K562 (cell line): ENCODE measurements at regions of chr9 and their contacts with region 1.

Region 1: DNA sequence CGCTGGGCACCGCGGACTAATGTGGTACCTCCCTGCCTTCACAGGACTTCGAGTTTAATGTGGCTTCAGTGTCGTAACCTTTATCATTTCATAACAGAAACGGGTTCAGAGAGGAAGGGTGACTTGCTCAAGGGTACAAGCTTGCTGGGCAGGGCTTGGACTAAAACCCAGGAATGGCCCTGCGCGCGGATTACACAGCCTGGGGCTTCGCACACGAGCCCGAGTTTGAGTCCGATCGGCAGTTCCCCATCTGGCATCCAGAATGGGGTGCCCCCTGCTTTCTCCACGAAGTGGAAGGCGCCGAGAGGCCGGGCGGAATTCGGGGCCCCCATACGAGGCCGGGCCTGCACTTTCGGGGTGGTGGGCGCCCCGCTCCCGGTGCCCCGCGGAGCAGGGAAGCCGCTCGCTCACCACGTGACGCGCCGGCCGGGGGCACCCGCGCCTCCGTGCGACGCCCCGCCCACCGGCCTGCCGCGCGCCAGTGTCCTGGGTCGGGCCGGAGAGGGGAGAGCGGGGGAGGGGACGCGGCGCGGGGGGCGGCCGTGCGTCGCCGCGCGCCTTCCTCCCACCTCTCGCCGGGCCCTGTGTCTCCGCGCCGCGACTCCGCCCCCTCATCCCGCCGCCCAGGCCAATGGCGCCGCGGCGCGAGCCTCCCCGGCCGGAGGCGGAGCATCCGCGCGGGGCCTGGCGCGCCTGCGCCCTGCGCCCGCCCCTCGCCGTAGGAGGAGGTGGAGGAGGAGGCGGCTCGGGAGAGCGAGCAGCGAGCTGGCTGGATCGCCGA is at the start of gene SET:
- DNase-seq: peak; percentile 99 to 100 (median 99)
- ATAC-seq: peak; percentile 95
- H3K4me3 ChIP-seq: peak within 1 kb of the TSS; percentile 71
- H3K27ac ChIP-seq: peak within 1 kb of the TSS; percentile 89
- H3K4me1 ChIP-seq: peaks cover 27 to 36% of the 10 kb centered on the region in 2 experiments
- H3K27me3 ChIP-seq: no peaks in the 10 kb centered on the region
- CTCF ChIP-seq: no peak; a peak in 1 of 6 replicates
- EP300 ChIP-seq: 0 out of 2 replicates have a peak, but pooled peaks have one; percentile 42
- POLR2A ChIP-seq: peak; percentile 79
- RAD21 ChIP-seq: peak; percentile 16 to 24; a peak in 2 of 4 replicates
- polyA plus RNA-seq, gene SET: 404 to 534 TPM

Region 2: DNA sequence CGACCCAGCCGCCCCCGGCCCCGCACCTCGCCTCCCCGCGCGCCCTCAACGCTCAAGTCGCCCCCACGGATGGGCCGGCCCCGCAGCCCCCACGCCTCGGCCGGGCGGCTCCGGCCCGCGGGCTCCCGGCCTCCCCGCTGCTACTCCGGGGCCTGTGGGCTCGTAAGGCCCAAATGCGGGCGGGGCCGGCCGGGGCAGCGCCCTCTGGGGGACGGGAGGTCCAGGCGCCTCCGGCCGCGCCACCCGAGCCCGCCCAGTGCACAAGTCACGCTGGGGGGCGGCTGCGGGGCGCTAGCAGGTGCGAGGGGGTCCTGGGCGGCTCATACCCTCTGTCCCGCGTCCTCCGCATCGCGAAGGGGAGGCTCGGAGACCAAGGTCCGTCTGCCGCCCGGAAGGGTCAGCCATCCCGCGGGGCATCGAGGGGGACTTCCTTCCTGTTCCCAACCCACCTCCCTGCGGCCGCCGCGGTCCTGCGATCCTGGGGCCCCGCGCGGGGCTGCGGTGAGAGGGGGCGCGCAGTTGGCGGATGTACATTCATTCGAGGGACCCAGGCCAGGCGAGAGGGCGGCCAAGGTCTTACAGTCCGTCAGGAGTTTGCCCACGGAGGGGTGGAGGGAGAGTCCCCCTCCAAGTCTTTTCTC is 497.2 kb before region 1 on chr9 and contains the start of gene CIZ1:
- CTCF ChIA-PET with region 1: no interaction called
- POLR2A ChIA-PET with region 1: no interaction called
- in situ Hi-C with region 1: no loop called
- intact Hi-C with region 1: loop called (anchors 10 kb)
- DNase-seq: peak; percentile 96 to 99 (median 99)
- ATAC-seq: peak; percentile 96
- H3K4me3 ChIP-seq: peak within 1 kb of the TSS; percentile 92
- H3K27ac ChIP-seq: peak within 1 kb of the TSS; percentile 82
- H3K4me1 ChIP-seq: peaks cover 26 to 34% of the 10 kb centered on the region in 2 experiments
- H3K27me3 ChIP-seq: no peaks in the 10 kb centered on the region
- CTCF ChIP-seq: peak; percentile 87 to 97 (median 95)
- EP300 ChIP-seq: peak; percentile 59
- POLR2A ChIP-seq: no peak
- RAD21 ChIP-seq: peak; percentile 35 to 43
- polyA plus RNA-seq, gene CIZ1: 6.6 to 12.6 TPM

Region 3: DNA sequence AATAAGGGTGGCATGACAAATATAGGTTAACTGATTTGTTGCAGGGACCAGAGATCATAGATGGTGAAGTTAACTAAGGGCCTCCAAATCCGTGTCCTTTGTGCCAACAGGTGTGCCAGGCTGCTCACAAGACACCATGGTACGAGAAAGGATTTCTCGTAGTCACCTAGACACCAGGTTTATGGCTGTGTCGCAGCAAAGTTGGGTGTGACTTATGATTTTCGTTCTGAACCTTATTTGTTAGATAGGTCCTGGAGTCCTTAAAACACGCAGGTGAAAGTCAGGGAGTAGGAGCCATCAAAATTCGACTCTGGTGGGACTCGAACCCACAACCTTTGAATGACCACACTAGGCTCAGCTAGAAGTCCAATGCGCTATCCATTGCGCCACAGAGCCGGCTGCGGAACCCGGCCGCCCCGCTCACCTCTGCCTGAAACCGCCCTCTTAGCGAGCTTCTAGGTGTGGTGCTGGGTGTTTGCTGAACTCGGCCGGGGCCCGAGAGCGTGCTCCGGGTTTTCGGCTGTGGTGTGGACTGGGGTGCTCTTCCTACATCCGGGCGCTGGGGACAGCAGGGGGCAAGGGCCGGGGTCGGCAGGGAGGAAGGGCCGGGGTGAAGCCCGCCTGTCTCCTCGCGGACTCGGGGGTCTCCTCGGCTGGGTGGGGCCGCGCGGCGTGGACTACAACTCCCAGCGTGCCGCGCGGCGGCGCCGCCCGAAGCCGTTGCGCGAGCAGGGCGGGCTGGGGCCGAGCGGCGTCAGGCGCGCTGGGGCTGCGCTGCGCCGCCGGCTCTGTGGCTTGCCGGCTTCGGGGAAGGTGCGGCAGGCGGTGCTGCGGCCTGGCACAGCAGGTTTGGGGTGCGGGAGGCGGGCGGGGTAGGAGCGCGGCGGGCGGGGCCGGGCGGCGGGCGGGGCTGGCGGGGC is 348.7 kb before region 1 on chr9 and contains the start of gene SLC27A4:
- CTCF ChIA-PET with region 1: no interaction called
- POLR2A ChIA-PET with region 1: interaction called, 4 read pairs
- in situ Hi-C with region 1: no loop called
- intact Hi-C with region 1: loop called (anchors 1 kb)
- DNase-seq: peak; percentile 94 to 97 (median 96)
- ATAC-seq: peak; percentile 94
- H3K4me3 ChIP-seq: peak within 1 kb of the TSS; percentile 52
- H3K27ac ChIP-seq: peak within 1 kb of the TSS; percentile 62
- H3K4me1 ChIP-seq: peaks cover 10 to 19% of the 10 kb centered on the region in 2 experiments; a peak in 4 of 5 replicates
- H3K27me3 ChIP-seq: no peaks in the 10 kb centered on the region
- CTCF ChIP-seq: peak in 2 of 3 experiments; percentile 3 to 10; a peak in 3 of 6 replicates
- EP300 ChIP-seq: peak; percentile 50
- POLR2A ChIP-seq: peak; percentile 79
- RAD21 ChIP-seq: peak; percentile 13 to 30; a peak in 2 of 4 replicates
- polyA plus RNA-seq, gene SLC27A4: 0.25 to 0.92 TPM

Region 4: GRCh38 chr9:128702445-128702948 is 13.8 kb after region 1 on chr9 and contains the start of gene PKN3:
- CTCF ChIA-PET with region 1: no interaction called
- POLR2A ChIA-PET with region 1: interaction called, 10 read pairs
- in situ Hi-C with region 1: no loop called
- intact Hi-C with region 1: no loop called
- DNase-seq: peak; percentile 90 to 97 (median 92)
- ATAC-seq: peak; percentile 91
- H3K4me3 ChIP-seq: peak within 1 kb of the TSS; percentile 69
- H3K27ac ChIP-seq: peak within 1 kb of the TSS; percentile 71
- H3K4me1 ChIP-seq: peaks cover 9 to 43% of the 10 kb centered on the region in 2 experiments
- H3K27me3 ChIP-seq: no peaks in the 10 kb centered on the region
- CTCF ChIP-seq: peak; percentile 73 to 96 (median 89)
- EP300 ChIP-seq: no peak; the same call in 1 of the 2 replicates
- POLR2A ChIP-seq: peak; percentile 75
- RAD21 ChIP-seq: peak; percentile 57 to 58
- polyA plus RNA-seq, gene PKN3: 0.82 to 1.4 TPM

Region 5: GRCh38 chr9:128902351-128903078 is 213.8 kb after region 1 on chr9:
- CTCF ChIA-PET with region 1: no interaction called
- POLR2A ChIA-PET with region 1: no interaction called
- in situ Hi-C with region 1: no loop called
- intact Hi-C with region 1: no loop called
- DNase-seq: no peak
- ATAC-seq: no peak; the same call in 1 of the 3 replicates
- H3K4me3 ChIP-seq: no peak overlapping the region
- H3K27ac ChIP-seq: no peak overlapping the region
- H3K4me1 ChIP-seq: peaks cover 0 to 28% of the 10 kb centered on the region in 2 experiments; a peak in 1 of 5 replicates
- H3K27me3 ChIP-seq: no peaks in the 10 kb centered on the region
- CTCF ChIP-seq: no peak
- EP300 ChIP-seq: no peak
- POLR2A ChIP-seq: no peak
- RAD21 ChIP-seq: no peak

Region 6: DNA sequence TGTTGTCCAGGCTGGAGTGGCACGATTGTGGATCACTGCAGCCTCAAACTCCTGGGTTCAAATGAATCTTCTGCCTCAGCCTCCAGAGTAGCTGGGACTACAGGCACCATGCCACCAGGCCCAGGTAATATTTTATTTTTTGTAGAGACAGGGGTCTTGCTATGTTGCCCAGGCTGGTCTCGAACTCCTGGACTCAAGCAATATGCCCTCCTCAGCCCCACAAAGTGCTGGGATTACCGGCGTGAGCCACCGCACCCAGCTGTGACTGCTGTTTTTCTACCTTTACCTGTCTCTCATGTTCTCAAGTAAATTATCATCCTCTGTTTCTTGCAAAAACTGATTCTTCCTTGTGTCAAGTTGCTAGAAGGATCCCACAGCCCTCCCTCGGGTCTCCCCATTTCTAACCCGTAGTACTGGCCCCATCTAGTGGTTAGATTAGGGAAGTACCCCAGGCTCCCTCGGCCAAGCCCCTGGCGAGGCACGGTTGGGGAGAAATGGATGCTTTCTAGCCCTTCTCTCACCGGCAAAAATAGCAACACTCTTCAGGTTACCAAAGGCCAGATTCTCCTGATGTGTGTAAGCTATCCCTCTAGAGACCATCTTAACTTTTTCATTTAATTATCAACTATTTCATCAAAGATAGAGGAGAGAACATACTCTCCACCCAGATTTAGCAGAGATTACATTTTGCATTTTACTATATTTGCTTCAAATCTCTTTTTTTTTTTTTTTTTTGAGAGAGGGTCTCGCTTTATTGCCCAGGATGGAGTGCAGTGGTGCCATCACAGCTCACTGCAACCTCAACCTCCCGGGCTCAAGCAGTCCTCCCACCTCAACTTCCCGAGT is 1095.0 kb after region 1 on chr9:
- CTCF ChIA-PET with region 1: no interaction called
- POLR2A ChIA-PET with region 1: no interaction called
- in situ Hi-C with region 1: loop called (anchors 10 kb)
- intact Hi-C with region 1: no loop called
- DNase-seq: peak; percentile 89 to 97 (median 96)
- ATAC-seq: peak; percentile 97
- H3K4me3 ChIP-seq: no peak overlapping the region
- H3K27ac ChIP-seq: no peak overlapping the region
- H3K4me1 ChIP-seq: peaks cover 8 to 15% of the 10 kb centered on the region in 2 experiments; a peak in 3 of 5 replicates
- H3K27me3 ChIP-seq: no peaks in the 10 kb centered on the region; a peak in 1 of 5 replicates
- CTCF ChIP-seq: peak; percentile 97 to 99 (median 99)
- EP300 ChIP-seq: no peak; the same call in 1 of the 2 replicates
- POLR2A ChIP-seq: no peak
- RAD21 ChIP-seq: peak; percentile 100